Mammary epithelial cell (primary cell): ENCODE measurements at regions of chr12 and their contacts with region 1.

Region 1: GRCh38 chr12:76790564-76791552 is 26.9 kb downstream of the ZDHHC17 start:
- DNase-seq: no peak
- H3K4me3 ChIP-seq: no peak overlapping the region
- H3K27ac ChIP-seq: no peak overlapping the region
- H3K4me1 ChIP-seq: no peaks in the 10 kb centered on the region
- H3K27me3 ChIP-seq: no peaks in the 10 kb centered on the region
- CTCF ChIP-seq: peak; percentile 34 to 60

Region 2: GRCh38 chr12:76621582-76622024 is 169.3 kb before region 1 on chr12:
- CTCF ChIA-PET with region 1: no interaction called
- dilution Hi-C with region 1: no loop called
- in situ Hi-C with region 1: loop called (anchors 5 kb)
- intact Hi-C with region 1: loop called (anchors 1 kb)
- DNase-seq: peak; percentile 48
- H3K4me3 ChIP-seq: no peak overlapping the region
- H3K27ac ChIP-seq: no peak overlapping the region
- H3K4me1 ChIP-seq: no peaks in the 10 kb centered on the region
- H3K27me3 ChIP-seq: no peaks in the 10 kb centered on the region
- CTCF ChIP-seq: peak; percentile 90 to 96

Region 3: GRCh38 chr12:76688631-76689030 is 102.2 kb before region 1 on chr12:
- CTCF ChIA-PET with region 1: no interaction called
- dilution Hi-C with region 1: no loop called
- in situ Hi-C with region 1: no loop called
- intact Hi-C with region 1: loop called (anchors 2 kb)
- DNase-seq: no peak
- H3K4me3 ChIP-seq: no peak overlapping the region
- H3K27ac ChIP-seq: no peak overlapping the region
- H3K4me1 ChIP-seq: peaks cover 7% of the 10 kb centered on the region
- H3K27me3 ChIP-seq: no peaks in the 10 kb centered on the region
- CTCF ChIP-seq: peak; percentile 12 to 24

Region 4: DNA sequence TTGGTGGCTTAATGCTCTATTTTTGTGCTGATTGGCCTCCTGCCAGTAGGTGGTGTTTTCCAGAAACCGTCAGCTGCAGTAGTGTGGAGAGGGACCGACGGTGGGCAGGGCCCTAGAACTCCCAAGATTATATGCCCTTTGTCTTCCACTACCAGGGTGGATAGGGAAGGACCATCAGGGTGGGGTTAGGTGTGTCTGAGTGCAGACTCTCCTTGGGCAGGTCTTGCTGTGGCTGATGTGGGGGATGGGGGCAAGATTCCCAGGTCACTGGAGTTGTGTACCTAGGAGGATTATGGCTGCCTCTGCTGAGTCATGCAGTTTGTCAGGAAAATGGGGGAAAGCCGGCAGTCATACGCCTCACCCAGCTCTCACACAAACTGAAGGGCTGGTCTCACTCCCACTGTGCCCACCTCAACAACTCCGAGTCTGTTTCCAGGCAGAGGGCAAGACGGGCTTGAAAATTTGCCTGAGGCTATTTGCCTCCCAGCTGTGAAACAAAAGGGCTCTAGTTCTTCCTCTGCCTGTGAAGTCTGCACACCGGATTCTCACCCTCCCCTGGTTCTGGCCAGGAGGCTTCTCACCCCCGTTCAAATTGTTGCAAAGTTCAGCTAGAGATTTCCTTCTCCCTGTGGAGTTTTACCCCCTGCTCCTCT is 51.8 kb before region 1 on chr12:
- CTCF ChIA-PET with region 1: no interaction called
- dilution Hi-C with region 1: no loop called
- in situ Hi-C with region 1: no loop called
- intact Hi-C with region 1: no loop called
- DNase-seq: no peak
- H3K4me3 ChIP-seq: no peak overlapping the region
- H3K27ac ChIP-seq: no peak overlapping the region
- H3K4me1 ChIP-seq: no peaks in the 10 kb centered on the region
- H3K27me3 ChIP-seq: no peaks in the 10 kb centered on the region
- CTCF ChIP-seq: no peak

Region 5: GRCh38 chr12:76763743-76764675 is 26.8 kb before region 1 on chr12 and contains the start of gene ZDHHC17:
- CTCF ChIA-PET with region 1: no interaction called
- dilution Hi-C with region 1: no loop called
- in situ Hi-C with region 1: no loop called
- intact Hi-C with region 1: loop called (anchors 2 kb)
- DNase-seq: peak; percentile 94
- H3K4me3 ChIP-seq: peak within 1 kb of the TSS; percentile 78 to 99 (median 98)
- H3K27ac ChIP-seq: peak within 1 kb of the TSS; percentile 87
- H3K4me1 ChIP-seq: no peaks in the 10 kb centered on the region
- H3K27me3 ChIP-seq: no peaks in the 10 kb centered on the region
- CTCF ChIP-seq: no peak
- total RNA-seq, gene ZDHHC17: 22.8 to 37.5 TPM

Region 6: GRCh38 chr12:76804435-76804976 is 13.6 kb after region 1 on chr12:
- CTCF ChIA-PET with region 1: no interaction called
- dilution Hi-C with region 1: no loop called
- in situ Hi-C with region 1: no loop called
- intact Hi-C with region 1: no loop called
- DNase-seq: no peak
- H3K4me3 ChIP-seq: no peak overlapping the region
- H3K27ac ChIP-seq: no peak overlapping the region
- H3K4me1 ChIP-seq: peaks cover 5% of the 10 kb centered on the region
- H3K27me3 ChIP-seq: no peaks in the 10 kb centered on the region
- CTCF ChIP-seq: no peak

Region 7: GRCh38 chr12:76820888-76821482 is 30.1 kb after region 1 on chr12:
- CTCF ChIA-PET with region 1: no interaction called
- dilution Hi-C with region 1: no loop called
- in situ Hi-C with region 1: no loop called
- intact Hi-C with region 1: loop called (anchors 2 kb)
- DNase-seq: peak; percentile 29
- H3K4me3 ChIP-seq: no peak overlapping the region
- H3K27ac ChIP-seq: no peak overlapping the region
- H3K4me1 ChIP-seq: no peaks in the 10 kb centered on the region
- H3K27me3 ChIP-seq: no peaks in the 10 kb centered on the region
- CTCF ChIP-seq: peak; percentile 74

Region 8: DNA sequence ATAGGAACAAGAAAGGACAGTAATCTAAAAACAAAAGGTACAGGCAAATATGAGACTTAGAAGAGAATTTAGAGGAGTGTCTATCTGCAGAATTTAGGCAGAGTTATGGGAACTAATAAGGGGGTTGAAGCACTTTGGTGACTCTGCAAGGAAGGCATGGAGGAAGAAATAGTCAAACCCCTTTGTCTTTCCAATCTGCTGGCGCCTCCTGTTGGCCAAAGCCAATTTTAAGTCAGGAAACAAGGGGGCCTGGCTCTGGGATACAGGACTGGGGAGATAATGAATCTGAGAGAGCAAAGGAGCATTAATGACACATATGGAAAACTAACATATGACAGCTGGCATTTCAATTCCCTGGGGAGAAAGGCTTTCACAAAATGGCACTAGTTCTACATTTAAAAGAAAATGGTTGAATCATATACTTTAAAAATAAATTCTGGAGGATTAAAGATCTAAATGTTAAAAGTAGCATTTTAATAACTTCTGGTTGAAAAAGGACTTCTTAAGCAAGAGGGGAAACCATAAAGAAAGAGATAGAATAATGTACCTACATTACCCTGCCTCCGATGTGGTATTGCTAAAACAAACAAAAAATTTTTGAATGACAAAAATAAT is 136.4 kb after region 1 on chr12:
- CTCF ChIA-PET with region 1: no interaction called
- dilution Hi-C with region 1: no loop called
- in situ Hi-C with region 1: no loop called
- intact Hi-C with region 1: loop called (anchors 10 kb)
- DNase-seq: peak; percentile 25
- H3K4me3 ChIP-seq: no peak overlapping the region
- H3K27ac ChIP-seq: no peak overlapping the region
- H3K4me1 ChIP-seq: no peaks in the 10 kb centered on the region
- H3K27me3 ChIP-seq: no peaks in the 10 kb centered on the region
- CTCF ChIP-seq: peak; percentile 65 to 80